Endothelial cell of umbilical vein (primary cell): ENCODE measurements at regions of chr4 and their contacts with region 1.

Region 1: DNA sequence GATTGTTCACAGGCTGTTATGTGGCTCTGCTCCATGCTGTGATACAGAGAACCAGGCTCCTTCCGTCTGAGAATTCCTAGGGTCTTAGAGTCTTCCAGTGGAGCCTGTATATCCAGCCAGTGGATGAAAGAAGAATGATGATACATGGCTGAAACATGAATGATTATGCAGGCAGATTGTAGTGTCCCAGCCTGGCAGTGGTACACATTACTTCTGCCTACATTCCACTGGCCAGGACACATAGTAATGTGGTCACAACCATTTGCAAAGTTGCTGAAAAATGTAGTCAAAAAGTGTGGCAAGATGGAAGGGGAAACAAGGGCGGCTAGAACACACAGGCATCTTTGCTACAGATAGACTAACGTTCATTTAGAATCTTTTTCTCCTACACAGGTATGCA is 4.5 kb upstream of the GBA3 start:
- DNase-seq: no peak
- H3K4me3 ChIP-seq: no peak overlapping the region
- H3K27ac ChIP-seq: no peak overlapping the region
- H3K4me1 ChIP-seq: no peaks in the 10 kb centered on the region
- H3K27me3 ChIP-seq: no peaks in the 10 kb centered on the region
- CTCF ChIP-seq: no peak
- POLR2A ChIP-seq: no peak

Region 2: DNA sequence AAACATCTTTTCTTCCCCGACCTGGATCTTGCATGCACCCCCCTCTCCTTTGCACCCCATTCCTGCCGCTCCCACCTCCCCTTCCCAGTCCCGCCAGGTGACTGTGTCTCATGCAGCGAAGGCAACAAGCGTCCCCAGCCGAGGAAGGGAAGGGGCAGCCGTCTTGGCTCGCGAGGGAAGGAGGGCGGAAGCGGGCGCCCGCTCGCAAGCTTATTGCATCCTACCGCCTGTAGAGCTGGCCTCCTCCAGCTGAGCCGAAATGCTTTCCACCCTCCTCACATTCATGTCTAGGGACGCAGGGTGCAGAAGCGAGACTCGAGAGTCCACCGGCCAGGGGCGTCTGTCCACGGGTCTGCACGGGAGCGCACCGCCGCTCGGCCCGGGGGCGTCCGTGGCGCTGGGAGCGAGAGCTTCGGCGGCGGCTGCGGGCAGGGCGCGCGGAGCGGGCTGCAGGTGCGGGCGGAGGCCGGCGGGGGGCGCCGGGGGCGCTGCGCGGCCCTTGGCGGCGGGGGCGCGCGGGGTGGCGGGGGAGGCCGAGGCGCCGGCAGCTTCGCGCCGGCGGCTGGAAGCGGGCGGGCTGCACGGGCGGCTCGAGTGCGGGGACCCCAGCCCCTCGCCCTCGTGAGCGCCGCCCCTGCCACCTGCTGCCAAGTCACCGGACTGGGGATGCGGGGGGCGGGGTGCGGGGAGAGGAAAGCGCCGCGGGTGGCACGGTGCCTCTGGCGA is 739.7 kb before region 1 on chr4 and contains the start of gene KCNIP4:
- CTCF ChIA-PET with region 1: no interaction called
- POLR2A ChIA-PET with region 1: no interaction called
- dilution Hi-C with region 1: no loop called
- intact Hi-C with region 1: loop called (anchors 10 kb)
- DNase-seq: no peak
- H3K4me3 ChIP-seq: no peak within 1 kb of the TSS
- H3K27ac ChIP-seq: no peak within 1 kb of the TSS
- H3K4me1 ChIP-seq: no peaks in the 10 kb centered on the region
- H3K27me3 ChIP-seq: peaks cover 8 to 19% of the 10 kb centered on the region in 2 experiments
- CTCF ChIP-seq: no peak
- POLR2A ChIP-seq: no peak
- total RNA-seq, gene KCNIP4: not detected in 2 replicates

Region 3: GRCh38 chr4:22932326-22932725 is 244.1 kb after region 1 on chr4:
- CTCF ChIA-PET with region 1: no interaction called
- POLR2A ChIA-PET with region 1: no interaction called
- dilution Hi-C with region 1: no loop called
- intact Hi-C with region 1: no loop called
- DNase-seq: no peak
- H3K4me3 ChIP-seq: no peak overlapping the region
- H3K27ac ChIP-seq: no peak overlapping the region
- H3K4me1 ChIP-seq: no peaks in the 10 kb centered on the region
- H3K27me3 ChIP-seq: no peaks in the 10 kb centered on the region
- CTCF ChIP-seq: no peak
- POLR2A ChIP-seq: no peak